ENCODE measurements at regions of chr19 and their contacts with region 1.

Region 1: GRCh38 chr19:860481-861101 is 1.1 kb downstream of the CFD start:
- DNase-seq: peak; percentile 87
- ATAC-seq: peak; percentile 54
- H3K4me3 ChIP-seq: peak overlapping the region in 4 of 5 experiments; percentile 15 to 49 (median 35)
- H3K4me3 Mint-ChIP-seq: peak overlapping the region; percentile 56
- H3K27ac ChIP-seq: no peak overlapping the region
- H3K27ac Mint-ChIP-seq: no peak overlapping the region
- H3K4me1 ChIP-seq: peaks cover 29 to 51% of the 10 kb centered on the region in 2 donors
- H3K4me1 Mint-ChIP-seq: peaks cover 19% of the 10 kb centered on the region
- H3K27me3 ChIP-seq: peaks cover 0 to 38% (median 8%) of the 10 kb centered on the region in 4 experiments
- H3K27me3 Mint-ChIP-seq: peaks cover 7% of the 10 kb centered on the region
- CTCF ChIP-seq: peak; percentile 6

Region 2: GRCh38 chr19:763181-763580 is 97.4 kb before region 1 on chr19:
- CTCF ChIA-PET with region 1: no interaction called
- POLR2A ChIA-PET with region 1: no interaction called
- intact Hi-C with region 1: no loop called
- DNase-seq: no peak
- ATAC-seq: no peak
- H3K4me3 ChIP-seq: no peak overlapping the region
- H3K4me3 Mint-ChIP-seq: no peak overlapping the region
- H3K27ac ChIP-seq: no peak overlapping the region
- H3K27ac Mint-ChIP-seq: no peak overlapping the region
- H3K4me1 ChIP-seq: no peaks in the 10 kb centered on the region
- H3K4me1 Mint-ChIP-seq: no peaks in the 10 kb centered on the region
- H3K27me3 ChIP-seq: peaks cover 0 to 19% (median 0%) of the 10 kb centered on the region in 4 experiments
- H3K27me3 Mint-ChIP-seq: peaks cover 4% of the 10 kb centered on the region
- CTCF ChIP-seq: no peak

Region 3: GRCh38 chr19:782185-782877 is 78.3 kb before region 1 on chr19:
- CTCF ChIA-PET with region 1: no interaction called
- POLR2A ChIA-PET with region 1: no interaction called
- intact Hi-C with region 1: no loop called
- DNase-seq: no peak
- ATAC-seq: no peak
- H3K4me3 ChIP-seq: no peak overlapping the region
- H3K4me3 Mint-ChIP-seq: no peak overlapping the region
- H3K27ac ChIP-seq: no peak overlapping the region
- H3K27ac Mint-ChIP-seq: no peak overlapping the region
- H3K4me1 ChIP-seq: no peaks in the 10 kb centered on the region
- H3K4me1 Mint-ChIP-seq: no peaks in the 10 kb centered on the region
- H3K27me3 ChIP-seq: peaks cover 0 to 6% (median 0%) of the 10 kb centered on the region in 4 experiments
- H3K27me3 Mint-ChIP-seq: no peaks in the 10 kb centered on the region
- CTCF ChIP-seq: no peak

Region 4: GRCh38 chr19:892243-893050 is 31.9 kb after region 1 on chr19:
- CTCF ChIA-PET with region 1: interaction called, 17 read pairs
- POLR2A ChIA-PET with region 1: interaction called, 5 read pairs
- intact Hi-C with region 1: loop called (anchors 2 kb)
- DNase-seq: peak; percentile 50
- ATAC-seq: peak; percentile 60
- H3K4me3 ChIP-seq: peak overlapping the region; percentile 18 to 91 (median 76)
- H3K4me3 Mint-ChIP-seq: peak overlapping the region; percentile 95
- H3K27ac ChIP-seq: peak overlapping the region; percentile 68 to 98
- H3K27ac Mint-ChIP-seq: peak overlapping the region; percentile 100
- H3K4me1 ChIP-seq: peaks cover 5 to 37% of the 10 kb centered on the region in 2 donors
- H3K4me1 Mint-ChIP-seq: peaks cover 17% of the 10 kb centered on the region
- H3K27me3 ChIP-seq: no peaks in the 10 kb centered on the region
- H3K27me3 Mint-ChIP-seq: no peaks in the 10 kb centered on the region
- CTCF ChIP-seq: no peak

Region 5: GRCh38 chr19:913080-913748 is 52.6 kb after region 1 on chr19 and contains the start of gene R3HDM4:
- CTCF ChIA-PET with region 1: interaction called, 72 read pairs
- POLR2A ChIA-PET with region 1: interaction called, 23 read pairs
- intact Hi-C with region 1: no loop called
- DNase-seq: peak; percentile 87
- ATAC-seq: peak; percentile 45
- H3K4me3 ChIP-seq: peak within 1 kb of the TSS; percentile 72 to 91 (median 86)
- H3K4me3 Mint-ChIP-seq: peak within 1 kb of the TSS; percentile 85
- H3K27ac ChIP-seq: peak within 1 kb of the TSS; percentile 96 to 98
- H3K27ac Mint-ChIP-seq: peak within 1 kb of the TSS; percentile 93
- H3K4me1 ChIP-seq: peaks cover 47 to 62% of the 10 kb centered on the region in 2 donors
- H3K4me1 Mint-ChIP-seq: peaks cover 35% of the 10 kb centered on the region
- H3K27me3 ChIP-seq: peaks cover 0 to 27% (median 4%) of the 10 kb centered on the region in 4 experiments
- H3K27me3 Mint-ChIP-seq: peaks cover 3% of the 10 kb centered on the region
- CTCF ChIP-seq: no peak
- total RNA-seq, gene R3HDM4: 165 and 176 TPM in 2 replicates

Region 6: GRCh38 chr19:984165-984967 is 123.8 kb after region 1 on chr19 and contains the start of gene WDR18:
- CTCF ChIA-PET with region 1: interaction called, 33 read pairs
- POLR2A ChIA-PET with region 1: interaction called, 17 read pairs
- intact Hi-C with region 1: loop called (anchors 1 kb)
- DNase-seq: peak; percentile 94
- ATAC-seq: peak; percentile 90
- H3K4me3 ChIP-seq: peak within 1 kb of the TSS; percentile 40 to 99 (median 88)
- H3K4me3 Mint-ChIP-seq: peak within 1 kb of the TSS; percentile 95
- H3K27ac ChIP-seq: peak within 1 kb of the TSS; percentile 88 to 90
- H3K27ac Mint-ChIP-seq: peak within 1 kb of the TSS; percentile 93
- H3K4me1 ChIP-seq: peaks cover 19 to 27% of the 10 kb centered on the region in 2 donors
- H3K4me1 Mint-ChIP-seq: peaks cover 16% of the 10 kb centered on the region
- H3K27me3 ChIP-seq: no peaks in the 10 kb centered on the region
- H3K27me3 Mint-ChIP-seq: no peaks in the 10 kb centered on the region
- CTCF ChIP-seq: no peak
- total RNA-seq, gene WDR18: 50.5 and 60.5 TPM in 2 replicates

Measured in B cell (primary cell).